Activated CD4-positive, alpha-beta T cell treated with anti-CD3 and anti-CD28 coated beads for 36 hours (primary cell): ENCODE measurements at regions of chr14 and their contacts with region 1.

Region 1: DNA sequence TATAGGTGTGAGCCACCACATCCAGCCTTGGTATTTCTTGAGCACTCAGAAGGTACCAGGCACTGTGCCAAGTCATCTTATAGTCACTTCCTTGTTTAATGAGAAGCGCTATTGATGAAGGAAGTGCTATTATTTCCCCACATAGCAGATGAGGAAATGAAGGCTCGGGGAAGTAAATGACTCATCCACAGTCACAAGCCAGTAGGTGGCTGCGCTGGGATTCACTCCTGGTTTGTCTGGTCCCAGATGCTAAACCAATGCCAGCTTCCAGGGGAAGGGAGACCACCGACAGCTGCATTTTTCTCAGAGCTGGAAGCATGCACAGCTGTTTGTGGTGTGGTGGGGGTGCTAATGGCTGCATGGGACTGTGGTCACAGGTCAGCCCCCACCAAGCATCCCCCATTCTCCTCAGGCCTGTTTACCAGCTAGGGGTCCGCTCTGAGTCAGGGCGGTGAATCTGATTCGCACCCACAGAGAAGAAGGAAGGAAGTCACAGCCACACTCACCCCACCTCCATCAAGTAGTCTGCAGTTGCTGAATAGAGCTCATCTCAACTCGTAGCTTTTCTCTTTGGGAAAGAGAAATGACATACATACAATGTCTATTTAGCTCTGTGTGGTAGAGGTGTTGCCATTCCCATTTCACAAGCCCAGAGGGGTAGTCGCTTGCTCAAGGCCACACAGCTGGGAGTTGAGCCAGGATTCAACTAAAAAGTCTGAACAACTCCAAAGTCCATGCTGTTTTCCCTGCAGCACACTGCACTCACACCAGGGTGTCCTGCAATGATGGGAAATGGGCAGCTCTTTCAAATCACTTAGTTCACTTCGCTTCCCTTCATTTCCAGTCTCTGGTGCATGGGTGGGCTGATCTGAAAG is 6.3 kb upstream of the LTBP2 start:
- DNase-seq: peak; percentile 75
- ATAC-seq: peak; percentile 83
- H3K4me3 Mint-ChIP-seq: no peak overlapping the region
- H3K27ac Mint-ChIP-seq: peak overlapping the region; percentile 45
- H3K4me1 Mint-ChIP-seq: peaks cover 57% of the 10 kb centered on the region
- H3K27me3 Mint-ChIP-seq: peaks cover 7% of the 10 kb centered on the region

Region 2: DNA sequence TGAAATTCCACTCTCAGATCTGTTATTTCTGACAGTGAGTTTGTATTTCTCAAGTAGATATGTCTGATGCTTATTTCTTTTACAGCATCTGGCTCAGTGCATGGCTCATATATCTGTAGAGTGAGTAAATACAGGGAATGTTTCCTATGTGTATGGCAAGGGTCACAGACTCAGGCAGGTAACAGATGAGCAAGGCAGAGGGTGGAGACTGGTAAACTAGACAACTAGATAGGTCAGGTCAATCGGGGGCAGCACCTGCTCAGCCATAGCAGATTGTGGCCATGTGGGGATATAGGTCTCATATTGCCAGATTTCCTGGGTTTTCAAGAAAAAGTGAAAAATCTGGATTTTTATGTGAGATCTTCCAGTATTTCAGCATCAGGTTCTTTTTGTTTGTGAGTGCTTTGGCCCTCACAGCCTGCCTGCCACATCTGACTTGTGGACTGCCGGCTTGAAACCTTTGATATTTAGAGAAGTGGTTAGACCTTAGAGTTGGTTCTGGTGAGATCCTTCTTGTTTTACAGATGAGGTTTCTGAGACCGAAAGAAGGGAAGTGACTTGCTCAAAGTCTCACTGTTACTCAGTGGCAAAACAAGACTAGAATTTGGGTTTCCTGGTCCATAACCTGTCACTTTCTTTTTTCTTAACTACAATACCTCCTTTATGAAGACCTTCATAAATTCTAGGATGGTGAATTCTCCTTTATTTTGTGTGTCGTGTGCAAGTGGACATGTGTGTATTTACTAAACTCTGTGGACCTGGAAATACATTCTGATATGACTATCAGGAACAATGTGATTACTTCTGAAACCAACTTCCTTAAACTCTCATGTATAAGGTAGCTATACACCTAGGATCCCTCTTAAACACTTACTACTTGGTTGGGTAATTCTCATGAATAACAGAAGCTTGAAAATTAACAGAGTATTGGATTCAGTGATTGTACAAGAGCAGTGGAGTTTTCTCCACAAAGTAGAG is 223.2 kb after region 1 on chr14:
- CTCF ChIA-PET with region 1: no interaction called
- POLR2A ChIA-PET with region 1: no interaction called
- intact Hi-C with region 1: loop called (anchors 2 kb)
- DNase-seq: peak; percentile 49
- ATAC-seq: peak; percentile 81
- H3K4me3 Mint-ChIP-seq: peak overlapping the region; percentile 24
- H3K27ac Mint-ChIP-seq: peak overlapping the region; percentile 80
- H3K4me1 Mint-ChIP-seq: peaks cover 59% of the 10 kb centered on the region
- H3K27me3 Mint-ChIP-seq: no peaks in the 10 kb centered on the region